ENCODE measurements at regions of chr14 and their contacts with region 1.

Region 1: DNA sequence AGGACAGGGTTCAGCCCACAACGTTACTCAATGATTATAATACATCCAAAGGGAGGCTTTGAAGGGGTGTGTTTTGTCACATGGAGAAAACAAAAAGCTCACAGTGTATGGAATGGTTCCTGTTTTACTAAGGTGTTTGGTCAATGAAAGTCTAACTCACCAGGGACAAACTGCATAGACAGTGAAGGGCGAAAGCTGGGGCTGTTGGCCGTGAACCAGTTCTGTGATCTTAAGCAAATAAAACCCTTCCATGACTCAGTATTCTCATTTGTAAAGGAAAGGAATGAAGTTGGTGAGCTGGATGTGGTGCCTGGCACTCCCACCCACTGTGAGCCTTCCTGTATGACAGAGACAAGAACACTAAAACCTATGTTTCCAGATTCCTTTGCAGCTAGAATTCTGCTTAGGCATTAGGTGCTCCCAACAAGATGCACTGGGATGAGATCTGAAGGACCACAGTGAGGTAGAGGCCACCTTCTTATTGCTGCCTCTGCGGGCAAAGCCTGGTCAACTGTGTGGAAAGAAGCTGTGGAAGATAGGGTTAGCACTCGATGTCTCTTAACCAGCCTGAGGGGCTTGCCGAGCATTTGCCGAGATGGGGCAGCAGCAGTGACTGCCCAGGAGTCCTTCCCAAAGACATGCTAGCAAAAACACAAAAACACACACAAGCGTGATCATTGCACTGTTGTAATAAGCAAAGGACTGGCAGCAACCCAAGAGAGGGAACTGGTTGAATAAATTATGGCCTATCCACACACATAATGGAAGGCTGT is 48.5 kb downstream of the VCPKMT start:
- DNase-seq: no peak
- ATAC-seq: no peak
- H3K4me3 ChIP-seq: no peak overlapping the region
- H3K4me3 Mint-ChIP-seq: no peak overlapping the region
- H3K27ac ChIP-seq: no peak overlapping the region
- H3K27ac Mint-ChIP-seq: no peak overlapping the region
- H3K4me1 ChIP-seq: peaks cover 34% of the 10 kb centered on the region
- H3K4me1 Mint-ChIP-seq: peaks cover 61% of the 10 kb centered on the region
- H3K27me3 ChIP-seq: no peaks in the 10 kb centered on the region
- H3K27me3 Mint-ChIP-seq: no peaks in the 10 kb centered on the region
- CTCF ChIP-seq: no peak

Region 2: DNA sequence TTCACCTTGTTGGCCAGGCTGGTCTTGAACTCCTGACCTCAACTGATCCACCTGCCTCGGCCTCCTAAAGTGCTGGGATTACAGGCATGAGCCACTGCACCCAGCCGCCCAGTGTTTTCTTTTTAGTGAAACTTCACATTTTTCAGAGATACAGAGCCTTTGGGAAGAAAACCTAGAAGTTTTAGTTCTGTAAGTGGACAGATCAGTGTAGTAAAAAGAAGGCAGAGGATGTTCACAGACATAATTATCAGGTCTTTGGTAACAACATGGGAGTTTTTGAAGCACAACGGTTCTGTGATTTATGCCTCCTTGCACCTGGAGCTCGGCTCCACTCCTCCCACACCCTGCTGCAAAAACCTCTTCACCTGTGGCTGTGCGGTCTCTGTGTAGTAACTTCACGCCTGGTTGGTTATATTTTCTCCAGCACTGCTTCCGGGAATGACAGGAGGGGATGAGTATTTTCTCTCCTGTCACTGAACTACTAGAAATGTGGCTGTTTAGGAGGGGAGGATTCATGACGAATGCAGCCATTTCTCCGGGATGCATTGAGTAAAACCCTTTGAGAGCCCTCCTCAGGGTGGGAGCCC is 108.0 kb before region 1 on chr14:
- CTCF ChIA-PET with region 1: no interaction called
- POLR2A ChIA-PET with region 1: no interaction called
- intact Hi-C with region 1: no loop called
- DNase-seq: peak in 6 of 14 experiments; percentile 17 to 60 (median 56)
- ATAC-seq: peak; percentile 83
- H3K4me3 ChIP-seq: no peak overlapping the region
- H3K4me3 Mint-ChIP-seq: peak overlapping the region; percentile 0
- H3K27ac ChIP-seq: no peak overlapping the region
- H3K27ac Mint-ChIP-seq: peak overlapping the region; percentile 66
- H3K4me1 ChIP-seq: peaks cover 13% of the 10 kb centered on the region
- H3K4me1 Mint-ChIP-seq: peaks cover 22% of the 10 kb centered on the region
- H3K27me3 ChIP-seq: no peaks in the 10 kb centered on the region
- H3K27me3 Mint-ChIP-seq: no peaks in the 10 kb centered on the region
- CTCF ChIP-seq: no peak

Region 3: DNA sequence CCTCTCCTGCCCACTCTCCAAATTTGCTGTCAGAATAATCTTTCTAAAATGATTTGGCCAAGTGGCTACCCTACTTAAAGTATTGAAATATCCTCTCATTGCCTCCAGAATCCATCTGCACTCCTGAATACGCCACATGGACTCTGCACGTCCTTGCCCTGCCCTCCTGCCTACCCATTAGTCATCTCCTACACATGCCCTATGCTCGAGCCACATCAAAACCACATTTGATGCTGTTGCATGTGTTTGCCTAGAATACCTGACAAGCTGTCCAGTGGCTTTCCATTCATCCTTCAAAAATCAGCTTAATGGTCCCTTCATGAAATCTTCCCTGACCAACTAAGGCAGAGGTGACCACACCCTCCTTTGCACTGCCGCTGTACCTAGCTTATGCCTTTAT is 31.4 kb after region 1 on chr14:
- CTCF ChIA-PET with region 1: interaction called, 11 read pairs
- POLR2A ChIA-PET with region 1: interaction called, 31 read pairs
- intact Hi-C with region 1: loop called (anchors 1 to 2 kb)
- DNase-seq: peak in 1 of 14 experiments; percentile 39
- ATAC-seq: no peak
- H3K4me3 ChIP-seq: no peak overlapping the region
- H3K4me3 Mint-ChIP-seq: peak overlapping the region; percentile 12
- H3K27ac ChIP-seq: no peak overlapping the region
- H3K27ac Mint-ChIP-seq: peak overlapping the region; percentile 79
- H3K4me1 ChIP-seq: peaks cover 47% of the 10 kb centered on the region
- H3K4me1 Mint-ChIP-seq: peaks cover 64% of the 10 kb centered on the region
- H3K27me3 ChIP-seq: no peaks in the 10 kb centered on the region
- H3K27me3 Mint-ChIP-seq: no peaks in the 10 kb centered on the region
- CTCF ChIP-seq: no peak